AG04449 (cell line): ENCODE measurements at regions of chr4 and their contacts with region 1.

Region 1: GRCh38 chr4:129362674-129363274 is 266.8 kb downstream of the C4orf33 start:
- DNase-seq: no peak
- H3K4me3 ChIP-seq: no peak overlapping the region
- CTCF ChIP-seq: peak; percentile 59

Region 2: GRCh38 chr4:128974136-128974581 is 388.6 kb before region 1 on chr4:
- CTCF ChIA-PET with region 1: no interaction called
- POLR2A ChIA-PET with region 1: no interaction called
- DNase-seq: no peak
- H3K4me3 ChIP-seq: no peak overlapping the region
- CTCF ChIP-seq: no peak

Region 3: DNA sequence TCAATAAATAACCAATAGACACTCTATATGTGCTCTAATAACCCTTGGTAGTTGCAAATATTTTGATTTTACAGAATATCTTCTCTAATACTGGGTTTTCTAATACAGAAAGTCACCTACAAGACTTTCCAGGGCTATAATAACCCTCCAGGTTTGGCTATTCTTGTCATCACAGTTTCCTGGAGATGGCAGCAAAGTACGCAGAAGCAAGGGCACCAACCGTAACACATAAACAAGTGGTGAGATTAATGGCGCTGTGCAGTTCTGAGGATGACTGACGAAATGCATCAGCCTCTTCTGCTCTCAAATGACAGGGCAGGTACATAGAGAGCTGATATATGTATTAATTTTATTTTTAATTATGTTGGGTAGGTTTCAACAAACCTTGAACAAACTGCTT is 144.4 kb before region 1 on chr4:
- CTCF ChIA-PET with region 1: no interaction called
- POLR2A ChIA-PET with region 1: no interaction called
- DNase-seq: no peak
- H3K4me3 ChIP-seq: no peak overlapping the region
- CTCF ChIP-seq: no peak

Region 4: GRCh38 chr4:129377131-129377845 is 14.5 kb after region 1 on chr4:
- CTCF ChIA-PET with region 1: interaction called, 15 read pairs
- POLR2A ChIA-PET with region 1: no interaction called
- DNase-seq: no peak
- H3K4me3 ChIP-seq: no peak overlapping the region
- CTCF ChIP-seq: no peak

Region 5: DNA sequence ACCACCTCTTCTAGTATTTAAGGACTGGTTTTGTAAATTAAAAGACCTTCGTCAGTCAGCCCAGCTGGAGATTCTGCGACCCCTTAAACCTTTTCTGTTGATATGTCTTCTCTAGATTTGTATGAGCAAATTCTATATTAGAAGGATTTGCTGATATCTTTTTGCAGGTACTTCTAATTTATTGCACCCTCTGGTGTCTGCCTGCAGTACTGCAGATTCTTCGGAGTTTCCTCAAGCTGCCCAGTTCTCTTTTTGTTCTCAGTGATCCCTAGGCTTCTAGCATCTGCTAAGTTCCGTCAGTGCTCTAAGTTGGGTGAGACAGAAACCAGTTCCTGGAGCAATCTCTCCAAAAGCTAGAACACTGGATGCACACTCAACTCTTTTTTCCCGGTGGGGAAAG is 278.4 kb after region 1 on chr4:
- CTCF ChIA-PET with region 1: interaction called, 36 read pairs
- POLR2A ChIA-PET with region 1: no interaction called
- DNase-seq: no peak
- H3K4me3 ChIP-seq: no peak overlapping the region
- CTCF ChIP-seq: no peak